Caco-2 (cell line): ENCODE measurements at regions of chr10 and their contacts with region 1.

Region 1: GRCh38 chr10:14737808-14738545 is 36.7 kb downstream of the FAM107B start:
- DNase-seq: peak; percentile 81 to 86
- H3K4me3 ChIP-seq: no peak overlapping the region
- H3K4me3 Mint-ChIP-seq: peak overlapping the region; percentile 1
- H3K27ac Mint-ChIP-seq: peak overlapping the region; percentile 27
- H3K4me1 ChIP-seq: peaks cover 56% of the 10 kb centered on the region
- H3K4me1 Mint-ChIP-seq: peaks cover 36% of the 10 kb centered on the region
- H3K27me3 ChIP-seq: no peaks in the 10 kb centered on the region
- H3K27me3 Mint-ChIP-seq: no peaks in the 10 kb centered on the region
- CTCF ChIP-seq: no peak

Region 2: DNA sequence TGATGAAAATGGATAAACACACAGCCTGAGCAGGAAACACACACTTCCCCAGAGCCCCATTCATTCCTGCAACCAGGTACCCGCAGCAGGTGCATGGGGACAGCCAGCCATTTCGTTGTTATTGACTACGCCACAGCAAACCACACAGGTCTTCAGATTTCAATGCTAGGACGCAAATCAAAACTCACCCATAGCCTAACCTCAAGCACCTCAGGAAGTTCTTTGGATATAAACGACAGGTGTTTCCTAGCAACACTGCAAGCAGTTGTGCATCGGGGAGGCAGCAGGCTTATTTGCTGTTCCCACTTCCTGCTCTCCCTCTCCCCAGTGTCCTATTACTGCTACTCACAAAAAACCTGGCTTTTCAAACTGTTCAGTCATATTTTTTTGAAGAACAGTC is 230.8 kb before region 1 on chr10:
- CTCF ChIA-PET with region 1: no interaction called
- POLR2A ChIA-PET with region 1: no interaction called
- intact Hi-C with region 1: no loop called
- DNase-seq: no peak
- H3K4me3 ChIP-seq: no peak overlapping the region
- H3K4me3 Mint-ChIP-seq: no peak overlapping the region
- H3K27ac Mint-ChIP-seq: peak overlapping the region; percentile 19
- H3K4me1 ChIP-seq: 0 out of 2 replicates have a peak, but pooled peaks cover 4% of the 10 kb centered on the region
- H3K4me1 Mint-ChIP-seq: no peaks in the 10 kb centered on the region
- H3K27me3 ChIP-seq: no peaks in the 10 kb centered on the region
- H3K27me3 Mint-ChIP-seq: no peaks in the 10 kb centered on the region
- CTCF ChIP-seq: no peak

Region 3: DNA sequence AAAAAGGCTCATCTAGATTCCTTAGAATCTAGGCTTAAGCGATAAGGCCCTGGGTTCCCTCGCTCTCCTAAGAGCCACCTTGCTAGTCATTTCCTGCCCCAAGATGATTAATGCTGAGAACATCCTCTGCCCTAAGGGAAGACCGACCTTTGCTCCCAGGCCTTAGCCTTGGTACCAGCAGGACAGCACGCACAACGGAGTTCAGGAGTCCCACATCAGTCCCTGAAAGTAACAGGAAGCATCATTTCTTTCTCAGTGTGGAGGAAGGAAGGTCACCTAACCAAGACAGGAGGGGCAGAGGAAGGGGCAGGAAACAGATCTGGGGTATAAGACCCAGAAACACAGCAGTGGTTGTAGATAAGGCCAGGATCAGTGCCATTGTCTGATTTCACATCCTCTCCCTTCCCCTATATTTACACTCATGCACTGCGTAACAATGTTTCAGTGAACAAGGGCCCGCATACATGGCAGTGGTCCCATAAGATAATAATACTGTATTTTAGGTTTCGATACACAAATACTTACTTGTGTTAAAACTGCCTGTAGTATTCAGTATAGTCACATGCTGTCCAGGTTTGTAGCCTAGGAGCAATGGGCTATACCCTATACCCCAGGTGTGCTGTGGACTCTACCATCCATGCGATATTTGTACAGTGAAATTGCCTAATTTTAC is 44.9 kb after region 1 on chr10:
- CTCF ChIA-PET with region 1: no interaction called
- POLR2A ChIA-PET with region 1: no interaction called
- intact Hi-C with region 1: loop called (anchors 1 kb)
- DNase-seq: peak; percentile 91 to 96
- H3K4me3 ChIP-seq: no peak overlapping the region
- H3K4me3 Mint-ChIP-seq: peak overlapping the region; percentile 49
- H3K27ac Mint-ChIP-seq: peak overlapping the region; percentile 90
- H3K4me1 ChIP-seq: peaks cover 37% of the 10 kb centered on the region
- H3K4me1 Mint-ChIP-seq: peaks cover 35% of the 10 kb centered on the region
- H3K27me3 ChIP-seq: no peaks in the 10 kb centered on the region
- H3K27me3 Mint-ChIP-seq: no peaks in the 10 kb centered on the region
- CTCF ChIP-seq: no peak